GM12878 (cell line): ENCODE measurements at regions of chr22 and their contacts with region 1.

Region 1: GRCh38 chr22:22587577-22588188 is 28.6 kb upstream of the PRAME start:
- DNase-seq: no peak
- ATAC-seq: no peak
- H3K4me3 ChIP-seq: no peak overlapping the region
- H3K27ac ChIP-seq: no peak overlapping the region
- H3K4me1 ChIP-seq: no peaks in the 10 kb centered on the region
- H3K27me3 ChIP-seq: no peaks in the 10 kb centered on the region
- CTCF ChIP-seq: no peak
- EP300 ChIP-seq: no peak
- POLR2A ChIP-seq: no peak
- RAD21 ChIP-seq: no peak

Region 2: DNA sequence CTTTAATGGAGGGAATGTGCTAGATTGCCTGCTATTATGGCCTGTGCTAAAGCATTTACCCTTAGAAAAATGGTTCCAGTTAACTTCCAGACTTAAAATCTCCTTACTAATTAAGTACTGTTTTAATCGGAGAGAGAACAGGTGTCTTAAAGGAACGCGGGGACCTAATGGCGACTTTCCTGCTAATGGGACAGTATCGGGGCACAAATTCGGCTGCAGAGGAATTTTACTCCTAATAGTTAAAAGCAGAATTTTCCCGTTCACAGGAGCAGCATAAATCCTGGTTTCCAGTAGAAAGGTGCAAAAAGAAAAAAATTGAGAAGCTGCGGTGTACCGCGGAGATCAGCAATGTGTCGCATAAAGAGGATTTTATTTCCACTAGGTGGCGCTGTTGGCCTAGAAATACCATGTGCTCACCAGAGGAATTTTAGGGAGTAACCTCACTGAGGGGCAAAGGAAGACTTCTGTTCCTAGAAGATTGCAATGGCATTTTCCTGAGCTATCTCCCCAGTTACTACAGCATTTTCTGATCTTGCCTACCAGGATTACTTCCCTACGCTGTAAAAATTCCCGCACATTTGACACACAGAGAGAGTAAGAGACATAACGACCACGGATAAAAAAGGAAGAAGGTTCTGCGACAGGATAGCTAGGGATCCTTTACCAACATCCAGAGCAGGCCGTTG is 123.7 kb before region 1 on chr22:
- CTCF ChIA-PET with region 1: interaction called, 8 read pairs
- POLR2A ChIA-PET with region 1: no interaction called
- RAD21 ChIA-PET with region 1: interaction called, 3 read pairs
- SMC1A ChIA-PET with region 1: interaction called, 23 read pairs
- in situ Hi-C with region 1: no loop called
- intact Hi-C with region 1: loop called (anchors 5 kb)
- DNase-seq: no peak
- ATAC-seq: peak; percentile 71
- H3K4me3 ChIP-seq: no peak overlapping the region
- H3K27ac ChIP-seq: no peak overlapping the region
- H3K4me1 ChIP-seq: no peaks in the 10 kb centered on the region
- H3K27me3 ChIP-seq: no peaks in the 10 kb centered on the region
- CTCF ChIP-seq: peak; percentile 27 to 63 (median 55); a peak in 5 of 6 replicates
- EP300 ChIP-seq: no peak
- POLR2A ChIP-seq: no peak
- RAD21 ChIP-seq: peak; percentile 68

Region 3: DNA sequence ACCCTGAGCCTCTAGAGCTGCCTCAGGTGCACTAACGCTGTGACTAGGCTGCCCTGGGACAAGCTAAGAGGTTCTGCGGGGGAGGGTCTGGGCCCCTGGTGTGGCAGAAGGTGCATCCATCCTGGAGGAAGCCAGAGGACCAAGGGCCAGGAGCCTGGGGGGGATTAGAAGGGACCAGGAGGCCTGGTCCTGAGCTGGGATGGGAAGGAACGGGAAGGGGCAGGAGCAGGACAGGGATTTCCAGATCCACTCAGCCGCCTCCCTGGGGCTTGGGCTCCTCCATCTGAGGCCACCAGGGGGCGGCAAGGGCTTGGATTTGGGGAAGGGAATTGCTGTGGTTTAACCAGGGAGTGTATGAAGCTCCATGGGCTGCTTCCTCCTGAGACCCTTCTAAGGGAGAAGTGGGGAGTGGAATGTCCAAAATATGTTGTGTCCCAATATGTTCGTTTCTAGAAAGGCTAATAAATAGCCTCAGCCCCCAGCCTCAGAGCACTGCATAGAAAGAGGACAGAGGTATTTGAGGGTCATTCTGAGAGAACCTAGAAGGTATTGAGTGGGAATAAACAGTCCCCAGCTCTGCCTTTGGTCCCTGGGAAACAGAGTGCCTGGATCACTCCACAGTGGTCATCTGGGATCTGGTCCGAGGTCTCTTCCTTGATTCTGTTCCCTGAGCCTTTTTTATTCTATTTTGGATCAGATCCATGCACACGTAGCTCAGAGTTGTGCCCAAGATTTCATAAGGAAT is 11.3 kb before region 1 on chr22:
- CTCF ChIA-PET with region 1: interaction called, 30 read pairs
- POLR2A ChIA-PET with region 1: no interaction called
- RAD21 ChIA-PET with region 1: interaction called, 12 read pairs
- SMC1A ChIA-PET with region 1: interaction called, 4 read pairs
- in situ Hi-C with region 1: no loop called
- intact Hi-C with region 1: no loop called
- DNase-seq: no peak
- ATAC-seq: peak; percentile 68
- H3K4me3 ChIP-seq: no peak overlapping the region
- H3K27ac ChIP-seq: no peak overlapping the region
- H3K4me1 ChIP-seq: no peaks in the 10 kb centered on the region
- H3K27me3 ChIP-seq: no peaks in the 10 kb centered on the region
- CTCF ChIP-seq: peak; percentile 55 to 78 (median 66)
- EP300 ChIP-seq: no peak
- POLR2A ChIP-seq: no peak
- RAD21 ChIP-seq: peak; percentile 40

Region 4: DNA sequence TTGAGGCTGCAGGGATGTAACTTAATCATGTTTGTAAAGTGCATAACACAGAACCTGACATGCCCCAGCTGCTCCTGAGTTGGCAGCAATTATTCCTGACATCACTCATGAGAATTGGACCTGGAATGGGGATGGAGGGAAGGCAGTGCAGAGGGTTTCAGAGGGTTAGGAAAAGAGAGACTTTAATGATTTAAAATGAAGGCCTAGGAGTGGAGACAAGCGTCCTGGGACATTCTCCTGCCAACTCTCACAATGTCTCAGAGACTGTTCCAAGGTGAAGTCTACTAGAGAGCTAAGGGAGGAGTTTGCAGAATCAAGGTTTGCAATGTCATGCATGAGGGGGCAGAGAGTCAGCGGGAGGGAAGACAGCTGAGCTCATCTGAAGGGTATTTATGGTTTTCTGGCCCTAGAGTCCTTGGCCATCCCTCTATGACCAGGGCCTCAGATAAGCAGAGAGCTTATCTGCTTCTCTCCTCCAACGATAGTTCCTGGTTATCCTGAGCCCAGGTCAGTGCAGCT is 93.6 kb after region 1 on chr22:
- CTCF ChIA-PET with region 1: interaction called, 31 read pairs
- POLR2A ChIA-PET with region 1: no interaction called
- RAD21 ChIA-PET with region 1: interaction called, 7 read pairs
- SMC1A ChIA-PET with region 1: interaction called, 4 read pairs
- in situ Hi-C with region 1: loop called (anchors 5 kb)
- intact Hi-C with region 1: no loop called
- DNase-seq: no peak
- ATAC-seq: no peak
- H3K4me3 ChIP-seq: no peak overlapping the region
- H3K27ac ChIP-seq: no peak overlapping the region
- H3K4me1 ChIP-seq: peaks cover 17% of the 10 kb centered on the region
- H3K27me3 ChIP-seq: no peaks in the 10 kb centered on the region
- CTCF ChIP-seq: no peak
- EP300 ChIP-seq: no peak
- POLR2A ChIP-seq: no peak
- RAD21 ChIP-seq: no peak

Region 5: GRCh38 chr22:22692707-22693530 is 105.2 kb after region 1 on chr22:
- CTCF ChIA-PET with region 1: interaction called, 19 read pairs
- POLR2A ChIA-PET with region 1: no interaction called
- RAD21 ChIA-PET with region 1: interaction called, 3 read pairs
- SMC1A ChIA-PET with region 1: interaction called, 5 read pairs
- in situ Hi-C with region 1: loop called (anchors 5 kb)
- intact Hi-C with region 1: no loop called
- DNase-seq: no peak
- ATAC-seq: peak; percentile 79
- H3K4me3 ChIP-seq: no peak overlapping the region
- H3K27ac ChIP-seq: no peak overlapping the region; the same call in 1 of the 2 replicates
- H3K4me1 ChIP-seq: peaks cover 25% of the 10 kb centered on the region
- H3K27me3 ChIP-seq: no peaks in the 10 kb centered on the region
- CTCF ChIP-seq: peak; percentile 50 to 73 (median 69)
- EP300 ChIP-seq: no peak
- POLR2A ChIP-seq: no peak
- RAD21 ChIP-seq: peak; percentile 75